Heart right ventricle (tissue), 16 donors: ENCODE measurements at regions of chr2 and their contacts with region 1.

Region 1: DNA sequence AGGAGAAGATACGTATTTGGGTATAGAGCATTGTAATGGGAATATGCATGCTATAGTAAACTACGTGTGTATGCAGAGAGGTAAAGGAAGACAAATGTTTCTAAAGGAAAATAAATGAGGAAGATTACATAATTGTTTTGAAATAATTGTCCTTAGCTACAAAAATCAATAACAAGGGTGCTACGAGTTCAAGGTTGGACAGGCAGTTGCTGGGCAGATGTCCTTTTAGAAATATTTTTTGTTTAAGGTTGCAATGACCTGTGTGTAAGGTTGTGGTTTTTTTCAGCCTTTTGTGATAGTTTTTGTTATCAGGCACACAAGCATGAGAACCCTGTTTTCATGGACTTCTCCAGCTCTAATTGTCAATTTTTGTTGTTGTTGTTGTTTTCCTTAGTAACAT is 1304.1 kb upstream of the CHAC2 start:
- DNase-seq: no peak
- ATAC-seq: no peak
- H3K4me3 ChIP-seq: no peak overlapping the region
- H3K27ac ChIP-seq: no peak overlapping the region
- H3K4me1 ChIP-seq: no peaks in the 10 kb centered on the region
- H3K27me3 ChIP-seq: no peaks in the 10 kb centered on the region
- CTCF ChIP-seq: no peak

Region 2: DNA sequence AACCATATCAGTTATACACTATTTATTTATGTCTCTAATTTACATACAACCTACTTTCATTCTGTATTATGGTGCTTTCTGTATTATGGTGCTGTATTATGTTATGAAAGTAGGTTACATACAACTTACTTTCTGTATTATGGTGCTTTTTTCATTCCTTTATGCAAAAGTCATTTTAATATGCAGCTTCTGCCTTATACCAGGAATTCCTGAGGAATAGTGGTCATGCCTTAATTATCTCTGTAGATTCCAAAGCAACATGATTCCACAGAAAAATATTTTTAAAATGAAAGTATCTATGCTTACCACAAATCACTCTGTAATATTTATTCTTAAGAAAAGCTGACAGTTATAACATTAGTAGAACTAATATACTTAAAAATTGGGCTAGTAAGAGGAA is 509.5 kb before region 1 on chr2:
- intact Hi-C with region 1: loop called in 1 of 10 experiments (anchors 5 kb)
- DNase-seq: no peak
- ATAC-seq: no peak
- H3K4me3 ChIP-seq: no peak overlapping the region
- H3K27ac ChIP-seq: no peak overlapping the region
- H3K4me1 ChIP-seq: no peaks in the 10 kb centered on the region
- H3K27me3 ChIP-seq: no peaks in the 10 kb centered on the region
- CTCF ChIP-seq: no peak

Region 3: GRCh38 chr2:52128081-52128480 is 335.4 kb before region 1 on chr2:
- intact Hi-C with region 1: no loop called
- DNase-seq: no peak
- ATAC-seq: no peak
- H3K4me3 ChIP-seq: no peak overlapping the region
- H3K27ac ChIP-seq: no peak overlapping the region
- H3K4me1 ChIP-seq: no peaks in the 10 kb centered on the region
- H3K27me3 ChIP-seq: no peaks in the 10 kb centered on the region
- CTCF ChIP-seq: no peak